Aorta (tissue), 5 donors: ENCODE measurements at regions of chr12 and their contacts with region 1.

Region 1: DNA sequence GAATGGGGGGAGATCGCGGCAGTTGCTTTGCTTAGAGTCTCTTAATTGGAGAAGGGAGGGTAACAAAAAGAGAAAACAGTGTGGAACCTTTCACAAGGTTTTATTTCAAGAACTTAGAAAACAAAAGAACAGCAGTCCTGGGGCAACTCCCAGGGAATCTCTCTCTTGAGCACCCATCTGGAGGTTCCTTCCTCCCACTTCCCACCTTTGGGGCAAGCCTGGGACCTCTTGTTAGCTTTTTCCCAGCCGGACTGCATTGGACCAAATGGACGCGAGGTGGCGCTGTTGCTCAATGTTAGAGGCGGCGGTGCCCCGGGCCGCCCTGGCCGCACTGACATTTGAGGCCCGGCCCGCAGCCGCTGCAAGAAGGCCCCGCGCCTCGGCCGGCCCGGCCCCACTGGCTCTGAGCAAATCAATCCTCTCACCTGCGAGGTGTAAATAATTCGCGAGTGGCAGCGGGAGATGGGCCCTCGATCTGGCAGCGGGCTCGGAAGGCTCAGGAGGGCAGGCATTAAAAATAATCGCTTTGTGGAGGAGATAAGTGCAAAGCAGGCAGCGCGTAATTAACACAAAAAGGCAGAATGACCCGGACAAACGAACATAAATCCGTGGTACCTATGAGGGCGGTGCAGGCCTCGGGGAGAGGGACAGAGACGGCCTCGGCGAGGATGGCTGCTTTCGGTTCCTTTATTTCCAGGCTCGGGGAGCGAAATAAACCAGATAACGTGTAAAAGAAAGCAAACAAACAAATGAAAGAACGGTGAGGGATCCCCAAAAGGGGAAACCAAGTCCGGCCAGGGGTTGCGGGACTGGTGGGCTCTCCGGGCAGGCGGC is 2.7 kb upstream of the HOXC8 start:
- DNase-seq: peak; percentile 89 to 98
- ATAC-seq: peak; percentile 92
- H3K4me3 ChIP-seq: no peak overlapping the region
- H3K27ac ChIP-seq: no peak overlapping the region
- H3K4me1 ChIP-seq: no peaks in the 10 kb centered on the region
- H3K27me3 ChIP-seq: no peaks in the 10 kb centered on the region

Region 2: GRCh38 chr12:54201001-54201794 is 195.1 kb after region 1 on chr12:
- intact Hi-C with region 1: loop called (anchors 1 to 5 kb)
- DNase-seq: peak; percentile 74 to 89
- ATAC-seq: peak; percentile 88
- H3K4me3 ChIP-seq: no peak overlapping the region
- H3K27ac ChIP-seq: no peak overlapping the region
- H3K4me1 ChIP-seq: no peaks in the 10 kb centered on the region
- H3K27me3 ChIP-seq: no peaks in the 10 kb centered on the region

Region 3: DNA sequence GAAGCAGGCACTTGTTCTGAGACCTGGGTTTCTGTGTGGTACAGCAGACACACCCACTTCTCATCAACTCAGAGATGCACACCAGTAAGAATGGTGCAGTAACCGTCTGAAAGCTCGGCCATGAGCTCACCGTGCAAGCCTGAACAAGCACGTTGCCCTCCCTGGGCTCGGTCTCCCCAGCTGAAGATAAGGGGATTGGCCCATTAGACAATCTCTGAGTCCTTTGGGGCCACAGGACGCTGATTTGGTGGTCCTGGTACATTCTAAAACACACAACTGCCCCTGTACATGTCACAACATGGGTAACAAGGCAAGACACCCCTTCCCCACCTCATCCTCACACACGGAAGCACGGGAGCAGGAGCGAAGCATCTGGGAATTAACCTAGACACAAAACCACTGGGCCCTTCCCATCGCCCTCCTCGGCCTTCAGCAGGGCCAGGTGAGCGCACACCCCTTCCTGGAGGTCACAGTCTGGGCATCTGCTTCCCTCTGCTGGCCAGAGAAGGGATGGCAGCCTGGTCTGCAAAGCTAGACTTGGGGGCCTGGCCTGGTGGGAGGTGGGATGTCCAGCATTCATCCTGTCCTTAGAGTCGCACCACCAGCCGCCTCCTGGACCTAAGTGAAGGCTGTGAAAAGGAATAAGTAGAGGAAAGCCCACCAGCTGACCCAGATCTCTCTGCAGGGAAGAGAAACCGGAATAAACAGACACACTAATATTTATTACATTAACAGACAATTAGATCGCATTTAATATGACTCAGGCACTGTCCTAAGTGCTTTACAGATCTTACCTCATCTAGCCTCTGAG is 201.6 kb after region 1 on chr12:
- intact Hi-C with region 1: loop called in 1 of 2 experiments (anchors 5 kb)
- DNase-seq: peak; percentile 76 to 94
- ATAC-seq: peak; percentile 80
- H3K4me3 ChIP-seq: no peak overlapping the region
- H3K27ac ChIP-seq: no peak overlapping the region
- H3K4me1 ChIP-seq: no peaks in the 10 kb centered on the region
- H3K27me3 ChIP-seq: no peaks in the 10 kb centered on the region